Ascending aorta (tissue), 2 donors: ENCODE measurements at regions of chr7 and their contacts with region 1.

Region 1: GRCh38 chr7:87628780-87629569 is 777 bp downstream of the RUNDC3B start:
- DNase-seq: no peak
- H3K4me3 ChIP-seq: peak overlapping the region; percentile 66 to 71
- H3K27ac ChIP-seq: no peak overlapping the region
- H3K4me1 ChIP-seq: peaks cover 2 to 5% of the 10 kb centered on the region in 2 donors
- H3K27me3 ChIP-seq: no peaks in the 10 kb centered on the region
- CTCF ChIP-seq: no peak

Region 2: DNA sequence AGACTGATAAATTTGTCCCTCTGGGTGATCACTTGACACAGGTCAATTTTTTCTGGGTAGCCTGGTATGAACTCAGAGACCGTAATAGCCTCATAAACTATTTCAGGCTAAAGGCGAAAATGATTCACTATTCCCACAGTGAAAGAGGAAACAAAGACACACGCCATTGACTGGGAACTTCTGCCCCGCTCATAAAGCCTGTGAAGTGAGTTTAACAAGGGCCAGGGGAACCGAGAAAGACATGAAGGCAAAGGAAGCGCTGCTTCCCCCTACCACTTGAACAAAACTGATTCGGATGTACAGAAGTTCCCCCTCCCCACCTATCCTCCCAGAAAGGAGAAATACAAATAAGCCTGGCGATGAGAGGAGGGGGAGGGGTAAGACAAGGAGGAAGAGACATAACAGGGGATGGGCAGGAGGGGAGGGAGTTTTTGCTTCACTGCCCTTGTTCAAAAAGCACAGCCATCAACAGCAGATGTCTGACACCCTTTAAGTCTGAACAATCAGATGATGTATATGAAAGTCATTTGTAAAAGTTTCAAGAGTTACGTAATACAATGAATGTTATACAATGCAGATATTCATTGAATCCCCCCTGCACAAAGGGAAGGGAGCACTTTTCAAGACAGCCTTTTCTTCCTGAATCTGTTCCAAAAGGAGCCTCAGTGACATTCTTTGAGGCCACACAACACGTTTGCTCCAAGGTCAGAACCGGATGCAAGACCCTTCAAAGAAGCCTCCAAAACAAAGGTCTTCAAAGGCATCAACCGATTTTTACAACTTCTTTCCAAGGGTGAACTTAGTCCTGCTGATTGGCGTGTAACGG is 154.2 kb before region 1 on chr7:
- intact Hi-C with region 1: loop called (anchors 5 kb)
- DNase-seq: peak in 1 of 2 donors; percentile 73
- H3K4me3 ChIP-seq: peak overlapping the region; percentile 72 to 88
- H3K27ac ChIP-seq: peak overlapping the region; percentile 23 to 66
- H3K4me1 ChIP-seq: no peaks in the 10 kb centered on the region
- H3K27me3 ChIP-seq: no peaks in the 10 kb centered on the region
- CTCF ChIP-seq: no peak

Region 3: DNA sequence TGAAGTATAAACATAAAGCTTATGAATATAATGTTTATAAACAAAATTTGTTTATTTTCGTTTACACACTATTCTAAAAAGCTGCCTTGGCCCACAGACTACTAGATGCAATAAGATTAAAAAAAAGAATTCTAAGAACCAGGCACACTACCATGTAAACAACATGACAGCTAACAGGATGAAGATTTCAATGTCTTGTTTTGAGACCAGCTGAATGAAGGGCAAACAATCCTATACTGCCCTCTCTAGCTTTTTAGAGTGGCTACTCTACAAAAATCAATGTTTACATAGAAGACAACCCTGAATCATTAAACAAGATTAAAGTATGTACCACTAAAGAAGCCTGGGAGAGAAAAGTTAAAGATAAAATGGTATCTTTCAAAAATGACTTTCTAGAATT is 208.6 kb after region 1 on chr7:
- intact Hi-C with region 1: no loop called
- DNase-seq: no peak
- H3K4me3 ChIP-seq: no peak overlapping the region
- H3K27ac ChIP-seq: no peak overlapping the region
- H3K4me1 ChIP-seq: no peaks in the 10 kb centered on the region
- H3K27me3 ChIP-seq: no peaks in the 10 kb centered on the region
- CTCF ChIP-seq: no peak

Region 4: GRCh38 chr7:88268863-88269262 is 639.9 kb after region 1 on chr7:
- intact Hi-C with region 1: no loop called
- DNase-seq: no peak
- H3K4me3 ChIP-seq: no peak overlapping the region
- H3K27ac ChIP-seq: no peak overlapping the region
- H3K4me1 ChIP-seq: no peaks in the 10 kb centered on the region
- H3K27me3 ChIP-seq: no peaks in the 10 kb centered on the region
- CTCF ChIP-seq: no peak